MCF 10A (cell line): ENCODE measurements at regions of chr6 and their contacts with region 1.

Region 1: DNA sequence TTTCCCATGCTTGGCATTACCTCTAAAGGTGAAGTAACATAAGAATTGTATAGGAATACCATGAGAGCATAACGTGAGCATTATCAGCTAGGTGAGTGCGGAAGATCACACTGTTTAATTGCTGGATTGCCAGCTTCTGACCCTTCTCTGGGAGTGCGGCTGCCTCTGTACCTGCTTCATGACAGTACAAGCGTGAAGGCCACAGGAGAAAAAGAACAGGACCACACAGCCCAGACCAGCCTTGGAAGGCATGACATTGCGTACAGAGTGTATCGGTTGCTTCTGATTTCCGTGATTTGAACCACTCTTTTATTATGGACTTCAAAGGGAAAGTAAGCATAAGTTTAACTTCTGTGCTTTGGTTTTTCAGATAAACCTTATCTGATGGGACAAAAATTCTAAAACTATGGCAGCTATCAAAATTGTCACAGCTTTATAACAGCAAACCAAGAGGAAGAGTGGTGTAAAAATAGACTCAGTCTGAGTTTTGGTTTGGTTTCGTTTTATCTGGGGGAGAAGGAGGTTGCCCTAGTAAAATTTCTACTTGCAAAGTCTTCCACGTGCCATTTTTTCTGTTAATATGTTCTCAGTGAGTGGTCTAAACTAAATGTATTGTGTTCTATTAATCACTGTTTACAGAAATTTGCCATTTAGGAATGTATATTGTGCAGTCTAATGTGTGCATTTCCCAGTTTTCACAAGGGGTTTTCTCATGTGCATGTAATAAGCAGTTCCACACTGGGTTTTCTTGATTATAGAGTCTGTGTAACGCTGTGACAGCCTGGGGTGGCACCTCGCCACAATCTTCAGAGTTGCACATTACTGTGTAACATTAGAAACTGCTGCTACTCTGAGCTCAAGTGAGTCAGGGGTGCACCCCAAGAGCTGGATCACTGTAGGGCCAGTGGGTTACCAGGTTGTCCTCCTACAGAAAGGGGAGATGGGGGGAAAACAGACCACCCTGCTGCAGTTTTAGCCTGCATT is 97.3 kb downstream of the RPP40 start:
- DNase-seq: no peak
- H3K4me3 Mint-ChIP-seq: no peak overlapping the region
- H3K27ac Mint-ChIP-seq: no peak overlapping the region
- H3K4me1 Mint-ChIP-seq: peaks cover 14% of the 10 kb centered on the region
- H3K27me3 Mint-ChIP-seq: no peaks in the 10 kb centered on the region
- CTCF ChIP-seq: no peak

Region 2: DNA sequence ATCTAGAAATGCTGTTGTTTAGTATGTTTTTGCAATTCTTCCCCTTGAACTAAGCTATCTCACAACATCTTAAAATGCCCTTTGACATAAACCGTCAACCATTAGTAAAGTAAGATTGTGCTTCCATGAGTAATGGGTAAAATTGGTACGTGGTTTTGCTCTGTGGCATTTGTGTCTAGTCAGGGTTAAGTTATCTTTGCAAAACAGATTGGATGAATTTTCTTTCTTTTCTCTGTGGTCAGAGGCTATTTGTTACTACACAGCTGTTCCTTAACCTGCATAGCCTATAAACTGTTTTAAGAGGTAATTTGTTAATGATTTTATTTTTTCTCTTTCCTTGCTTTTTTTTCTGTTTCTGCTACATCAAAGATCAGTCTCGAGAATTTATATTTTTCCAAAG is 21.8 kb after region 1 on chr6:
- CTCF ChIA-PET with region 1: interaction called, 3 read pairs
- POLR2A ChIA-PET with region 1: interaction called, 10 read pairs
- intact Hi-C with region 1: no loop called
- DNase-seq: no peak
- H3K4me3 Mint-ChIP-seq: no peak overlapping the region
- H3K27ac Mint-ChIP-seq: no peak overlapping the region
- H3K4me1 Mint-ChIP-seq: peaks cover 27% of the 10 kb centered on the region
- H3K27me3 Mint-ChIP-seq: no peaks in the 10 kb centered on the region
- CTCF ChIP-seq: no peak